ENCODE measurements at regions of chr3 and their contacts with region 1.

Region 1: GRCh38 chr3:56758539-56758981 is 43.2 kb downstream of the ARHGEF3 start:
- DNase-seq: peak in 2 of 5 donors; percentile 7 to 62
- H3K4me3 ChIP-seq: no peak overlapping the region
- H3K4me3 Mint-ChIP-seq: peak overlapping the region; percentile 32 to 81 (median 67)
- H3K27ac ChIP-seq: no peak overlapping the region
- H3K27ac Mint-ChIP-seq: peak overlapping the region; percentile 71 to 96 (median 84)
- H3K4me1 ChIP-seq: peaks cover 86% of the 10 kb centered on the region
- H3K4me1 Mint-ChIP-seq: peaks cover 87 to 95% (median 94%) of the 10 kb centered on the region in 3 donors
- H3K27me3 ChIP-seq: no peaks in the 10 kb centered on the region
- H3K27me3 Mint-ChIP-seq: no peaks in the 10 kb centered on the region

Region 2: GRCh38 chr3:56477646-56478045 is 280.9 kb before region 1 on chr3:
- CTCF ChIA-PET with region 1: no interaction called
- POLR2A ChIA-PET with region 1: no interaction called
- DNase-seq: no peak
- H3K4me3 ChIP-seq: no peak overlapping the region
- H3K4me3 Mint-ChIP-seq: no peak overlapping the region
- H3K27ac ChIP-seq: no peak overlapping the region
- H3K27ac Mint-ChIP-seq: no peak overlapping the region
- H3K4me1 ChIP-seq: no peaks in the 10 kb centered on the region
- H3K4me1 Mint-ChIP-seq: no peaks in the 10 kb centered on the region
- H3K27me3 ChIP-seq: no peaks in the 10 kb centered on the region
- H3K27me3 Mint-ChIP-seq: peaks cover 18 to 73% of the 10 kb centered on the region in 2 donors

Region 3: DNA sequence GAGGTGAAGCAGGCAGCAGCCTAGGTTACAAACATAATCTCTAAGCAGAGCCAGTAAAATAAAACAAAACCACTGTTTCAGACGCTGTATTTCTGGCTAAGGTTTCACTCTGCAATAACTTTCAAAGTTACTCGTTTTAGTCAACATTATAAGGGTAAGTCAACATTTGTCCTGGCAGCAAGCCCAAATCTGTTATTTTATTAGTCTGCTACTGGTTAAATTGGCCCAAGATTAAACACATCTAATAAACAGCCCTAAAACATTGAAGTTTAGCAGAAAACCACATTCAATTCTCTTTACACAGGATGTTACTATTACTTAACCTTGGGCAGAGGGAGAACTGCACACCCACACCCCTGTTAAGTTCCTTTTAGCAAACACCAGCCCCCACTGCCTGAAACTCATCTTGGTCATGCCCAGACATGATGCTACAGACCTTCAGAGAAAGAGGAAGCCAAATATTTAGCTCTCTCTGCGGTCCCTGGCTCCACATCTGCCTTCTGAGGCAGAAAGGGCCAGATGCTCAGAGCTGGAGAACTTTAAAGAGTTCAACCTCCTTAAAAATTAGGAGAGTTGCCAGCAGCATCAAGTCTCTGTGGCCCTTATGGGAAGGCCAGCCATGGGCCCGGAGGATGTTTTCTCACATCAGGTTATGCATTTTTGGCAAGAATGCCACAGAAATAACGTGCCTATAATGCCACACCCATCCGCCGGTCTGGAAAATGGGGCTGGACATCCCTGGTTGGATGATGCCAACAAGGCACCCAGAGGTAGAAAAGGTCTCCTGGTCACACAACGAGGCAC is 25.3 kb after region 1 on chr3:
- CTCF ChIA-PET with region 1: interaction called, 8 read pairs
- POLR2A ChIA-PET with region 1: interaction called, 17 read pairs
- DNase-seq: peak; percentile 40 to 88 (median 82)
- H3K4me3 ChIP-seq: peak overlapping the region; percentile 51
- H3K4me3 Mint-ChIP-seq: peak overlapping the region; percentile 43 to 87 (median 82)
- H3K27ac ChIP-seq: peak overlapping the region; percentile 55
- H3K27ac Mint-ChIP-seq: peak overlapping the region; percentile 87 to 99 (median 95)
- H3K4me1 ChIP-seq: peaks cover 99% of the 10 kb centered on the region
- H3K4me1 Mint-ChIP-seq: peaks cover 96 to 98% (median 98%) of the 10 kb centered on the region in 3 donors
- H3K27me3 ChIP-seq: no peaks in the 10 kb centered on the region
- H3K27me3 Mint-ChIP-seq: no peaks in the 10 kb centered on the region

Region 4: GRCh38 chr3:56923521-56924224 is 165.1 kb after region 1 on chr3:
- CTCF ChIA-PET with region 1: no interaction called
- POLR2A ChIA-PET with region 1: no interaction called
- DNase-seq: peak; percentile 18 to 81 (median 75)
- H3K4me3 ChIP-seq: peak overlapping the region; percentile 7
- H3K4me3 Mint-ChIP-seq: peak overlapping the region; percentile 50 to 82 (median 67)
- H3K27ac ChIP-seq: peak overlapping the region; percentile 55
- H3K27ac Mint-ChIP-seq: peak overlapping the region; percentile 83 to 99 (median 98)
- H3K4me1 ChIP-seq: peaks cover 87% of the 10 kb centered on the region
- H3K4me1 Mint-ChIP-seq: peaks cover 72 to 92% (median 89%) of the 10 kb centered on the region in 3 donors
- H3K27me3 ChIP-seq: no peaks in the 10 kb centered on the region
- H3K27me3 Mint-ChIP-seq: no peaks in the 10 kb centered on the region